ENCODE measurements at regions of chr1 and their contacts with region 1.

Region 1: DNA sequence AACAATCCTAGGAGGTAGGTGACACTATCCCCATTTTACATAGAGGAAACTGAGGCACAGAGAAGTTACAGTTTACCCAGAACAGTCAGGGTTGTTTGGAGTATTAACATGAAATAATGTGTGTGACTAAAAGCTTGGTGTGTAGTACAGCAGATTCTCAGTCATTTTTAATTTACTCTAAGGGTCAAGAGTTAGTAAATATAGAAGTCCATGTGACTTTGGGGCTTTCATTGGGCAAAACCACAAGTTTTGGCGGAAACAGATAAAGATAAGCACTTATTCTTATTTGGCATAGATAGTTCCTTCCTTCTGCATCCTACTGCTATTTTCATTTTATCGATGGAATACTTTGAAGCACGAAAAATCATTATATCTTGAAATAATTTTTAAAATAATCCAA is 128.5 kb downstream of the DNM3 start:
- DNase-seq: no peak
- H3K4me3 ChIP-seq: no peak overlapping the region
- H3K27ac ChIP-seq: no peak overlapping the region
- H3K4me1 ChIP-seq: no peaks in the 10 kb centered on the region
- H3K27me3 ChIP-seq: no peaks in the 10 kb centered on the region
- CTCF ChIP-seq: no peak
- EP300 ChIP-seq: no peak
- POLR2A ChIP-seq: no peak

Region 2: DNA sequence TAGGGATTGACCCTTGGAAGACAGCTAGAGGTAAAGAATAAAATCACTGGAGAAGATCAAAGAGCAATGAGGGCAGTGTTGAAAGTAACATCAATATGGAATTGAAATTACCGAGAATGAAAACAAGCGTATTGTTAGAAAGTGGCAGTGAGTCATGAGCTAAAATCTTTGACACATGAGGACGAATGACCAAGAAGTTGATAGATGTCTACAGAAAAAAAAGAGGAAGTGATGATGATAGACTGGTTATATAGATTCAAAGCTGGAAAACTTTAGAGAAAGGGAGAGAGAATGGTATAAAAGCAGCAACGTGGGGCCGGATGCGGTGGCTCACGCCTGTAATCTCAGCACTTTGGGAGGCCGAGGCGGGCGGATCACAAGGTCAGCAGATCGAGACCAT is 141.0 kb before region 1 on chr1:
- intact Hi-C with region 1: loop called (anchors 10 kb)
- DNase-seq: no peak
- H3K4me3 ChIP-seq: no peak overlapping the region
- H3K27ac ChIP-seq: no peak overlapping the region
- H3K4me1 ChIP-seq: no peaks in the 10 kb centered on the region
- H3K27me3 ChIP-seq: no peaks in the 10 kb centered on the region
- CTCF ChIP-seq: no peak
- EP300 ChIP-seq: no peak
- POLR2A ChIP-seq: no peak

Region 3: GRCh38 chr1:172024516-172024915 is 54.7 kb after region 1 on chr1:
- intact Hi-C with region 1: no loop called
- DNase-seq: no peak
- H3K4me3 ChIP-seq: no peak overlapping the region
- H3K27ac ChIP-seq: no peak overlapping the region
- H3K4me1 ChIP-seq: peaks cover 0 to 6% (median 0%) of the 10 kb centered on the region in 4 donors
- H3K27me3 ChIP-seq: no peaks in the 10 kb centered on the region
- CTCF ChIP-seq: no peak
- EP300 ChIP-seq: no peak
- POLR2A ChIP-seq: no peak

Measured in stomach (tissue), 19 donors.